CD8-positive, alpha-beta T cell (primary cell): ENCODE measurements at regions of chr19 and their contacts with region 1.

Region 1: DNA sequence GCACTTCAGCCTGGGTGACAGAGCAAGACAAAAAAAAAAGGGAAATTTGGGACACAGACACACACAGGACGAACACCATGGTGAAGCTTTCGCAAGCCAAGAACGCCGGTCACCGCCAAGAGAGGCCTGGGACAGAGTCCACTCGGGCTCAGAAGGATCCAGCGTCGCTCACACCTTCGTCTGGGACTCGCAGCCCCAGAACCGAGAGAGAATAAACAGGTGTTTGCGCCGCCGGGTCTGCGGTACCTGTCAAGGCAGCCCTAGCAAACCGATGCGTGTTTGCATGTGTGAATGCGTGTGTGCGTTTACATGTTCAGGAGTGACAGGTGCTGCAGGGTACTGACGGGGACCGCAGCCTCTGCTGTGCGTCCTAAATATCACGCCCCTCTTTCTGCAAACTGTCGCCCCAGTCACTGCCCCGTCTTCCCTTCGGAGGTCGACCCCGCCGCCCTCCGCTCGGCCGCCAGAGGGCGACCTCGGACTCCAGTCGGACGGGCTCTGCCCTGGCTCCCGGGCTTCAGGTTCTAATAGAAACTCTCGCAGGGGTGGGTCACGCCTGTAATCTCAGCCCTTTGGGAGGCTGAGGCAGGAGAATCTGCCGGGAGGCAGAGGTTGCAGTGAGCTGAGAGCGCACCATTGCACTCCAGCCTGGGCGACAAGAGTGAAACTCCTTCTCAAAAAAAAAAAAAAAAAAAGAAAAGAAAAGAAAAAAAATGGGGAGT is 11.8 kb upstream of the CSNK1G2 start:
- DNase-seq: peak; percentile 66 to 93 (median 81)
- ATAC-seq: peak; percentile 82
- H3K4me3 ChIP-seq: peak overlapping the region; percentile 38 to 44
- H3K4me3 Mint-ChIP-seq: peak overlapping the region; percentile 80
- H3K27ac ChIP-seq: no peak overlapping the region
- H3K27ac Mint-ChIP-seq: no peak overlapping the region
- H3K4me1 ChIP-seq: peaks cover 21% of the 10 kb centered on the region
- H3K4me1 Mint-ChIP-seq: peaks cover 21% of the 10 kb centered on the region
- H3K27me3 ChIP-seq: no peaks in the 10 kb centered on the region
- H3K27me3 Mint-ChIP-seq: no peaks in the 10 kb centered on the region
- CTCF ChIP-seq: peak; percentile 80

Region 2: GRCh38 chr19:1913781-1914577 is 15.2 kb before region 1 on chr19:
- CTCF ChIA-PET with region 1: interaction called, 11 read pairs
- POLR2A ChIA-PET with region 1: no interaction called
- intact Hi-C with region 1: no loop called
- DNase-seq: no peak
- ATAC-seq: no peak
- H3K4me3 ChIP-seq: no peak overlapping the region
- H3K4me3 Mint-ChIP-seq: no peak overlapping the region
- H3K27ac ChIP-seq: no peak overlapping the region
- H3K27ac Mint-ChIP-seq: no peak overlapping the region
- H3K4me1 ChIP-seq: peaks cover 17% of the 10 kb centered on the region
- H3K4me1 Mint-ChIP-seq: peaks cover 14% of the 10 kb centered on the region
- H3K27me3 ChIP-seq: no peaks in the 10 kb centered on the region
- H3K27me3 Mint-ChIP-seq: no peaks in the 10 kb centered on the region
- CTCF ChIP-seq: no peak

Region 3: DNA sequence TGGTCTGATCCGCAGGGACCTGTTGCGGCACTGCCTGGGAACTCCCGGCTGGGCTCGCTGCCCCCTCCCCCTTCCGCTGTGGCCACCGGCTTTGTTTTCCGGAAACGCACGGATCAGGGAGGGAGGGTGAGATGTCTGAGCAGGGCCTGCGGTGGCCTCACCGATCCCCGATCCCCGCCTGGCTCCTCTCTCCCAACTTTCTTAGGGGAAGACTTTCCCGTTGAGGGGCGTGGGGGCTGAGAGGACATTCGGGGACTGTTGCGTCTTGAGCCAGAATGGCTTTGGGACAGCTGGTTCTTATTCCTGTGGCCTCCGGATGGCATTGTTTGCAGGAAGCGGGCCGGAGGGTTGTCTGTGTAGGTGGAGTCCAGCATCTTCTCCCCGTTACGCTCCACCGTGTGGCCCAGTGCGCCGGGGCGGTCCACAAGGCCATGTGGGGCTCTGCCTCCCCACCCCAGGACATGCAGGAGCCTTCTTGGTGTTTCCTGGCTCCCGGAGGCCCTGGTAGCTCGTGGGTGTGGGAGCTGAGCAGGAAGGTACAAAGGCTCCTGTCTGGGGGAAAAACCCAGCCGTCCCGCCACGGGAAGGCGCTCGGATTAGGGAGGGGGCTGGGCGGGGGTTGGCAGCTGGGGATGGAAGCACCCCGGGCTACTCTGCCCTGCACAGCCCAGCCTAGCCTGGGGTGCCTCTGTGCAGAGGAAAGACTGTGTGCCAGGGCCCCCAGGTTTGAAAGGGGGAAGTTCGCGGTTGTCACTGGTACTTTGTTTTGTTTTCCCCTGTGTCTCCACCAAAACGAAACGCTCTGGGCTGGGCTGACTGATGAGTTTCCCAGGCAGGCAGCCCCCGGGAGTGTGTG is 13.1 kb after region 1 on chr19:
- CTCF ChIA-PET with region 1: interaction called, 8 read pairs
- POLR2A ChIA-PET with region 1: interaction called, 3 read pairs
- intact Hi-C with region 1: loop called in 1 of 2 experiments (anchors 1 kb)
- DNase-seq: peak; percentile 65 to 94 (median 83)
- ATAC-seq: peak; percentile 52
- H3K4me3 ChIP-seq: peak overlapping the region; percentile 80 to 100
- H3K4me3 Mint-ChIP-seq: peak overlapping the region; percentile 93
- H3K27ac ChIP-seq: peak overlapping the region; percentile 88 to 98
- H3K27ac Mint-ChIP-seq: peak overlapping the region; percentile 93
- H3K4me1 ChIP-seq: peaks cover 34% of the 10 kb centered on the region
- H3K4me1 Mint-ChIP-seq: peaks cover 30% of the 10 kb centered on the region
- H3K27me3 ChIP-seq: no peaks in the 10 kb centered on the region
- H3K27me3 Mint-ChIP-seq: no peaks in the 10 kb centered on the region
- CTCF ChIP-seq: no peak

Region 4: GRCh38 chr19:1967087-1967608 is 38.0 kb after region 1 on chr19:
- CTCF ChIA-PET with region 1: interaction called, 3 read pairs
- POLR2A ChIA-PET with region 1: interaction called, 5 read pairs
- intact Hi-C with region 1: loop called in 1 of 2 experiments (anchors 2 kb)
- DNase-seq: peak in 8 of 9 experiments; percentile 15 to 76 (median 62)
- ATAC-seq: peak; percentile 65
- H3K4me3 ChIP-seq: peak overlapping the region in 1 of 2 experiments; percentile 8
- H3K4me3 Mint-ChIP-seq: peak overlapping the region; percentile 62
- H3K27ac ChIP-seq: peak overlapping the region; percentile 6 to 46
- H3K27ac Mint-ChIP-seq: peak overlapping the region; percentile 87
- H3K4me1 ChIP-seq: peaks cover 16% of the 10 kb centered on the region
- H3K4me1 Mint-ChIP-seq: peaks cover 21% of the 10 kb centered on the region
- H3K27me3 ChIP-seq: no peaks in the 10 kb centered on the region
- H3K27me3 Mint-ChIP-seq: no peaks in the 10 kb centered on the region
- CTCF ChIP-seq: no peak